Naive thymus-derived CD4-positive, alpha-beta T cell (primary cell): ENCODE measurements at regions of chr9 and their contacts with region 1.

Region 1: GRCh38 chr9:36855448-36856315 is 178.4 kb downstream of the PAX5 start:
- DNase-seq: peak in 1 of 9 donors; percentile 30
- ATAC-seq: peak; percentile 68
- H3K4me3 ChIP-seq: no peak overlapping the region
- H3K4me3 Mint-ChIP-seq: peak overlapping the region in 2 of 10 donors; percentile 4 to 47
- H3K27ac ChIP-seq: no peak overlapping the region
- H3K27ac Mint-ChIP-seq: peak overlapping the region in 1 of 9 donors; percentile 8
- H3K4me1 ChIP-seq: peaks cover 0 to 5% of the 10 kb centered on the region in 2 donors
- H3K4me1 Mint-ChIP-seq: peaks cover 0 to 13% (median 7%) of the 10 kb centered on the region in 7 donors
- H3K27me3 ChIP-seq: no peaks in the 10 kb centered on the region
- H3K27me3 Mint-ChIP-seq: peaks cover 0 to 12% (median 6%) of the 10 kb centered on the region in 5 donors

Region 2: GRCh38 chr9:36102742-36103495 is 752.8 kb before region 1 on chr9:
- CTCF ChIA-PET with region 1: no interaction called
- POLR2A ChIA-PET with region 1: no interaction called
- intact Hi-C with region 1: no loop called
- DNase-seq: peak; percentile 70 to 87 (median 82)
- ATAC-seq: peak; percentile 100
- H3K4me3 ChIP-seq: no peak overlapping the region
- H3K4me3 Mint-ChIP-seq: no peak overlapping the region
- H3K27ac ChIP-seq: no peak overlapping the region
- H3K27ac Mint-ChIP-seq: peak overlapping the region in 4 of 9 donors; percentile 12 to 76 (median 61)
- H3K4me1 ChIP-seq: peaks cover 0 to 5% of the 10 kb centered on the region in 2 donors
- H3K4me1 Mint-ChIP-seq: peaks cover 5 to 8% (median 8%) of the 10 kb centered on the region in 7 donors
- H3K27me3 ChIP-seq: no peaks in the 10 kb centered on the region
- H3K27me3 Mint-ChIP-seq: no peaks in the 10 kb centered on the region

Region 3: GRCh38 chr9:36632892-36633291 is 222.8 kb before region 1 on chr9:
- CTCF ChIA-PET with region 1: interaction called, 3 read pairs
- POLR2A ChIA-PET with region 1: no interaction called
- intact Hi-C with region 1: loop called in 1 of 2 experiments (anchors 10 kb)
- DNase-seq: peak in 1 of 9 donors; percentile 7
- ATAC-seq: no peak
- H3K4me3 ChIP-seq: no peak overlapping the region
- H3K4me3 Mint-ChIP-seq: no peak overlapping the region
- H3K27ac ChIP-seq: no peak overlapping the region
- H3K27ac Mint-ChIP-seq: no peak overlapping the region
- H3K4me1 ChIP-seq: no peaks in the 10 kb centered on the region
- H3K4me1 Mint-ChIP-seq: peaks cover 0 to 4% (median 0%) of the 10 kb centered on the region in 7 donors
- H3K27me3 ChIP-seq: no peaks in the 10 kb centered on the region
- H3K27me3 Mint-ChIP-seq: no peaks in the 10 kb centered on the region

Region 4: DNA sequence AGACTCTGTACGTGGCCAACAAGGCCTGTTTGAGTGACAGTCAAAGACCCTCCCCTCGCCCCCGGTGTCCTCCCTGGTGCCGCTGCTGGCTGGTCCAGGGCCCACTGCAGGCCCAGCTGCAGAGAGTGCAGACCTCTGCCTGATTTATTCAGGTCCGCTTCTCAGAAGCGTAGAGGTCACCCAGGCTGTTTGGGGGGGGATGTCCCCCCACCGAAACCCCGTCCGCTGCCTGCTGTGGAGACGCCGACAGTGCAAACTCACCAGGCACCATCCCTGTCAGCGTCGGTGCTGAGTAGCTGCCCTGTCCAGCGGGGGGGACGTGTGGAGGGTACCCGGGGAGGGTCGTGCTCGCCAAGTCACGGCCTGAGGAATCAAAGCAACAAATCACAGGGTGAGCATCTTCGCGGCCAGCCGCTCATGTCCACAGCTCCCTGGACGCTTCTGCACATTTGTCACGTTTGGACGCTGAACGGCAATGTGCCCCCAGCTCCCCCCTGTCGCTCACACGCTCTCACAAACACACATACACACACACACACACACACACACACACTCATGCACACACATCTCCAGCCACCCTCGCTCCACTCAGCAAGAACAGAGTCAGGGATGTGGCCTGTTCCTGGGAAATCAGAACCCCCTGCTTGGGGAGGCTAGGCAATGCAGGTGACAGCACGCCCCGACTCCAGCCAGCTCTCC is 26.2 kb after region 1 on chr9:
- CTCF ChIA-PET with region 1: no interaction called
- POLR2A ChIA-PET with region 1: no interaction called
- intact Hi-C with region 1: no loop called
- DNase-seq: no peak
- ATAC-seq: no peak
- H3K4me3 ChIP-seq: no peak overlapping the region
- H3K4me3 Mint-ChIP-seq: no peak overlapping the region
- H3K27ac ChIP-seq: no peak overlapping the region
- H3K27ac Mint-ChIP-seq: no peak overlapping the region
- H3K4me1 ChIP-seq: no peaks in the 10 kb centered on the region
- H3K4me1 Mint-ChIP-seq: no peaks in the 10 kb centered on the region
- H3K27me3 ChIP-seq: no peaks in the 10 kb centered on the region
- H3K27me3 Mint-ChIP-seq: peaks cover 7 to 23% (median 12%) of the 10 kb centered on the region in 5 donors

Region 5: DNA sequence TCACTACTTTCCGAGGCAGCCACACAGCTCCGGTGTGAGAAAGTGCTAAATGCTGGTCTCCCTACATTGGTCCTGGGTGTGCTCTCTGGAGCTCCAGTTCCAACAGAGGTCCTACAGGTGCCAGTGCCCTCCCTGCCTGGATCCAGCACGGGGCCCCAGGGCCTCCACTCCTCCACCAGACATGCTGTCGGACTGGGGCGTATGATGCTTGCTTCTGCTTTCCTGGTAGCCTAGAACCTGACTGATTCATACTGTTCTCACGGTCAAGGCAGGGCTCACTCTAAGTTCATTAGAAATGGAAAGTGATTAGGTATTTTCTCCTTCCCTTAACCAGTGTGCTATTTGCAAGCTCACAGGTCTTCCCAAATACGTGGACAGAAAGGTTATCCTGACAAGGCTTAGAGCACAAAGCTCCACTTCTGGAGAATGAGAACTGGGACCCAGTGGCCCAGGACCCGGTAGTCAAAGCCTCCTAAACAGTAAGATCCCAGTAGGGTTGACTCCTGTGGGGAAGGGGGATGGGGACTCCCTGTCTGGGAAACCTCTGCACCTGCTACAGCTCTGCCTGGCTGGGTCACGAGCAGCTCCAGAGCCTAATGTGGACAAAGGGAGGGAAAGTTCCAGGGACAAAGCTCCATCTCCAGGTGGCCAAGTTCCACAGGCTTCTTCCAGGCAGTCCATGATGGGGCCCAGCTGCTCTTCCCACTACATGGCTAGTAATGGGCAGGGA is 80.3 kb after region 1 on chr9:
- CTCF ChIA-PET with region 1: no interaction called
- POLR2A ChIA-PET with region 1: no interaction called
- intact Hi-C with region 1: no loop called
- DNase-seq: peak in 1 of 9 donors; percentile 18
- ATAC-seq: no peak
- H3K4me3 ChIP-seq: no peak overlapping the region
- H3K4me3 Mint-ChIP-seq: no peak overlapping the region
- H3K27ac ChIP-seq: no peak overlapping the region
- H3K27ac Mint-ChIP-seq: no peak overlapping the region
- H3K4me1 ChIP-seq: no peaks in the 10 kb centered on the region
- H3K4me1 Mint-ChIP-seq: peaks cover 0 to 4% (median 0%) of the 10 kb centered on the region in 7 donors
- H3K27me3 ChIP-seq: no peaks in the 10 kb centered on the region
- H3K27me3 Mint-ChIP-seq: peaks cover 5 to 16% (median 12%) of the 10 kb centered on the region in 5 donors

Region 6: GRCh38 chr9:37324261-37324683 is 468.6 kb after region 1 on chr9:
- CTCF ChIA-PET with region 1: no interaction called
- POLR2A ChIA-PET with region 1: no interaction called
- intact Hi-C with region 1: no loop called
- DNase-seq: no peak
- ATAC-seq: peak; percentile 22
- H3K4me3 ChIP-seq: no peak overlapping the region
- H3K4me3 Mint-ChIP-seq: no peak overlapping the region
- H3K27ac ChIP-seq: no peak overlapping the region
- H3K27ac Mint-ChIP-seq: peak overlapping the region in 1 of 9 donors; percentile 73
- H3K4me1 ChIP-seq: no peaks in the 10 kb centered on the region
- H3K4me1 Mint-ChIP-seq: peaks cover 0 to 8% (median 3%) of the 10 kb centered on the region in 7 donors
- H3K27me3 ChIP-seq: no peaks in the 10 kb centered on the region
- H3K27me3 Mint-ChIP-seq: no peaks in the 10 kb centered on the region